H1 (cell line): ENCODE measurements at regions of chr6 and their contacts with region 1.

Region 1: DNA sequence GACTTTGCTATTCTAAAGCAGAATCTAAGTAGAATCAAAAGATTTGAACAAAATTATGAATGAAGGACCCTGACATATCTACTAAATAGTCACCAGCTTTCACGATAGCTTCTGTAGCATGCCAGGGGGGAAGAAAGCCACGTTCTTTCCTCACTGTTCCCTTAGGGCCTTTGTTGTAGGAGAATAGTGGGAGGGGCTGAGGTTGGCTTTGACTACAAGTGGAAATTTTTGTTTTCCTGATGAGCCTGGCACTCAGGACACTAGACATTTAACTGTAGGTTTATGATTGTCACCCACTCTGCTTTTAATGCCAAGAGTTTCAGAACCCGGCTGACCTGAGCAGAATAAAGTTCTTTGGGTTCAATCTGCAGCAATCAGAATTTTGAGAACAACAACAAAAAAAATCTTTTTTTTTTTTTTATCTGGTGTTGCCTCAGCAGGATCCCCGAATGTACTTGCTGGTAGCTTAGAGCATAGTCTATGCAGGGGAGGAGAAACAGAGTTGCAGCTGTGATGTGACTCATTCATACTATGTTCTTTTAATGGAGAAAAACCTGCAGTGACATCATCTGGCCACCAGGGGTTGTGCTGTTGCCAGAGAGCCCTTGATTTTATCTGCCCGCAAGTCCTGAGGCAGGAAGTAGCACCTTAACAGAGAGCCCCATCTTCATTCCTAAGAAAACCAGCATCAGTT is 38.5 kb downstream of the TPD52L1 start:
- DNase-seq: peak; percentile 66 to 67
- H3K4me3 ChIP-seq: no peak overlapping the region
- H3K27ac ChIP-seq: no peak overlapping the region
- H3K4me1 ChIP-seq: peaks cover 0 to 10% (median 9%) of the 10 kb centered on the region in 4 experiments; a peak in 4 of 7 replicates
- H3K27me3 ChIP-seq: no peaks in the 10 kb centered on the region
- CTCF ChIP-seq: peak; percentile 57 to 84 (median 67)
- EP300 ChIP-seq: no peak
- POLR2A ChIP-seq: no peak
- RAD21 ChIP-seq: peak; percentile 70 to 74

Region 2: DNA sequence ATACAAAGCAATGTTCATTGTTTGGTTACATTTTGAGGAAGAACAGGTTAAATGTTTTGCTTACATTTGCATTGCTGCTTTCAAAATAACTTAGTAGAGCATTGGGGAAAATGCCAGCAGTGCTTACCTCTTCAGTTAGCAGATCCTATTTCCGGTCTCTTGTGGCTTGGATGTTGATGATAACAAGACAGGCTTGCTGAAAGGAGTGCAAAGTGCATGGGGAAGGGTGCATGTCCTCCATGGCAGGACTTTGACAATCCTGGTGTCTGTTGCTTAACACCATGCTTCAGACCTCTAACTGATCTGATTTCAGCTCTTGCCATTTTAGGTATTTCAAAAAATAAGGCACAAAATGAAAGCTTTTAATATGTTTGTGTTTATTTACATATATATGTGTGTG is 17.4 kb before region 1 on chr6:
- CTCF ChIA-PET with region 1: interaction called, 29 read pairs
- POLR2A ChIA-PET with region 1: no interaction called
- DNase-seq: no peak
- H3K4me3 ChIP-seq: no peak overlapping the region
- H3K27ac ChIP-seq: no peak overlapping the region
- H3K4me1 ChIP-seq: no peaks in the 10 kb centered on the region
- H3K27me3 ChIP-seq: no peaks in the 10 kb centered on the region
- CTCF ChIP-seq: no peak
- EP300 ChIP-seq: no peak
- POLR2A ChIP-seq: no peak
- RAD21 ChIP-seq: no peak

Region 3: GRCh38 chr6:125201961-125202591 is 10.0 kb after region 1 on chr6:
- CTCF ChIA-PET with region 1: interaction called, 79 read pairs
- POLR2A ChIA-PET with region 1: no interaction called
- DNase-seq: no peak
- H3K4me3 ChIP-seq: no peak overlapping the region
- H3K27ac ChIP-seq: no peak overlapping the region
- H3K4me1 ChIP-seq: peaks cover 0 to 10% (median 0%) of the 10 kb centered on the region in 4 experiments; a peak in 1 of 7 replicates
- H3K27me3 ChIP-seq: no peaks in the 10 kb centered on the region
- CTCF ChIP-seq: no peak
- EP300 ChIP-seq: no peak
- POLR2A ChIP-seq: no peak
- RAD21 ChIP-seq: no peak

Region 4: GRCh38 chr6:125213939-125214338 is 21.9 kb after region 1 on chr6:
- CTCF ChIA-PET with region 1: interaction called, 79 read pairs
- POLR2A ChIA-PET with region 1: interaction called, 3 read pairs
- DNase-seq: no peak
- H3K4me3 ChIP-seq: no peak overlapping the region
- H3K27ac ChIP-seq: no peak overlapping the region
- H3K4me1 ChIP-seq: peaks cover 0 to 3% (median 0%) of the 10 kb centered on the region in 4 experiments; a peak in 1 of 7 replicates
- H3K27me3 ChIP-seq: no peaks in the 10 kb centered on the region
- CTCF ChIP-seq: no peak
- EP300 ChIP-seq: no peak
- POLR2A ChIP-seq: no peak
- RAD21 ChIP-seq: peak in 1 of 2 experiments; percentile 32; a peak in 1 of 4 replicates

Region 5: DNA sequence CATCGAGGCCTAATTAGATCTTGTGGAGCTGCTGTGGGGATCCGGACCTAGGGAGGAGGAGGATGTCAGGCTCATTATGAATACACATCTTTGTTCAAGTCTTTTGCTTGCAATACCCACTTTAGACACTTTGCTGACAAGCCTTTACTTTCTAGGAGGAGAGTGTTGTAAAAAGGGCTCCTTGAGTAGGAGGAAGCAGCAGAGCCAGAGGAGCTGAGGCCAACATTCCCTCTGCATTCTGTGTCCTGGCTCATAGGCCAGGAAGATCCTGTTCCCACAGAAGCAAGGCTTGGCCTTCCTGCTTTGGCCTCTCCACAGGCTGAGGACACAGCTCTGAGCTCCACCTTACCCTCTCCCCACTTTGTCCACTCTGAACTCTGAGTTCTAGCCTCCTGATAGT is 28.6 kb after region 1 on chr6:
- CTCF ChIA-PET with region 1: interaction called, 20 read pairs
- POLR2A ChIA-PET with region 1: interaction called, 3 read pairs
- DNase-seq: no peak
- H3K4me3 ChIP-seq: no peak overlapping the region
- H3K27ac ChIP-seq: no peak overlapping the region
- H3K4me1 ChIP-seq: peaks cover 0 to 9% (median 1%) of the 10 kb centered on the region in 4 experiments; a peak in 3 of 7 replicates
- H3K27me3 ChIP-seq: no peaks in the 10 kb centered on the region
- CTCF ChIP-seq: no peak
- EP300 ChIP-seq: no peak
- POLR2A ChIP-seq: no peak
- RAD21 ChIP-seq: no peak

Region 6: DNA sequence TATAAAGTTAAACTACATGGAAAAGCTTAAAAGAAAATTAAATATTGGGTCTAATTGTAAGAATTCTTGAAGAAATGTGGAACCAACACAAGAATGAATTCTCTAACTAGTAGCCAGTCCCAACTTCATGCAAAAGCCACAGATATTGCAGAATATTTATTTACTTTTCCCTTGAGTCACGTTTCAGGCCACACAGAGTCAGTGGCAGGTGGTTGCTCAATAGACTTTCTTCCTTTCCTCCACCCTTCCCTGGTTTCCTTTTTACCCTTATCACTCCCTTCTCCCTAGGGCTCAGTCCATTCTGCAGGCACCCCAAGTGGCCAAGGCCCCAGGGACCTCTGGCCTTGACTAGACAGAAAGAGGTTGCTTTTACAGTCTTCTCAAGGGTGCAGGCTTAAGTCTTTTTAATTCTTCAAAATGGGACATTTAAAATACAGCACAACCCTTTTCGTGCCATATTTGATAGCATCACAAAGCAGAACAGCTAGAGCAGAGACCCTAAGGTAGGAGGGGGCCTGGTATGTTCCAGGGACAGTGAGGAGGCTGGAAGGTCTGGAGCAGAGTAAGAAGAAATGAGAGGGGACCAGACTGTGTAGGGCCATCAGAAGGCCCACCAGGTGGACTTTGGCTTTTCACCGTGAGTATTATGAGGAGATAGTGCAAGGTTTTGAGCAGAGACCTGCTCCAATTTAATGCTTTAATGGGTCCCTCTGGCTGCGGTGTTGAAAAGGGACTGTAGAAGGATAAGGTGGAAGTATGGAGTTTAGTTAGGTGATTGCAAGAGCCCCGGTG is 44.7 kb after region 1 on chr6:
- CTCF ChIA-PET with region 1: interaction called, 17 read pairs
- POLR2A ChIA-PET with region 1: no interaction called
- DNase-seq: no peak
- H3K4me3 ChIP-seq: no peak overlapping the region
- H3K27ac ChIP-seq: no peak overlapping the region
- H3K4me1 ChIP-seq: no peaks in the 10 kb centered on the region
- H3K27me3 ChIP-seq: no peaks in the 10 kb centered on the region
- CTCF ChIP-seq: no peak
- EP300 ChIP-seq: no peak
- POLR2A ChIP-seq: no peak
- RAD21 ChIP-seq: no peak

Region 7: DNA sequence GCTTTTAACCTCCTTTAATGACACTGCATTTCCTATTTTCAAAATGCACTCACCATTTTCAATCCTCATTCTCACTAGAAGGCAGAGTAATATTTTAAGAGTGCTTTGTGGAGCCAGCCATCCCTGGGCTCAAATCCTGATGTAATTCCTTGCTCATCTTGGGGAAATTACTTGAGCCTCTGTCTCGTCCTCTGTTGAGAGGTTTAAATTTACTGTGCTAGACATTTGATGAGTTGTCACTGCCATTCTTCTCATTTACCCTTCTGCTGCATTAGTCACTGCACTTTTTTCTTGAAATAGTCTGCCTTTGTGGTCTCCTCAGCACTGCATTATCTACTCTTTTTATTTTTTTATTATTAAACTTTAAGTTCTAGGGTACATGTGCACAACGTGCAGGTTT is 259.7 kb after region 1 on chr6:
- CTCF ChIA-PET with region 1: no interaction called
- POLR2A ChIA-PET with region 1: no interaction called
- DNase-seq: no peak
- H3K4me3 ChIP-seq: no peak overlapping the region
- H3K27ac ChIP-seq: no peak overlapping the region
- H3K4me1 ChIP-seq: peaks cover 0 to under 1% (median 0%) of the 10 kb centered on the region in 4 experiments; a peak in 1 of 7 replicates
- H3K27me3 ChIP-seq: no peaks in the 10 kb centered on the region
- CTCF ChIP-seq: no peak
- EP300 ChIP-seq: no peak
- POLR2A ChIP-seq: no peak
- RAD21 ChIP-seq: no peak